HEK293 (cell line): ENCODE measurements at regions of chr4 and their contacts with region 1.

Region 1: DNA sequence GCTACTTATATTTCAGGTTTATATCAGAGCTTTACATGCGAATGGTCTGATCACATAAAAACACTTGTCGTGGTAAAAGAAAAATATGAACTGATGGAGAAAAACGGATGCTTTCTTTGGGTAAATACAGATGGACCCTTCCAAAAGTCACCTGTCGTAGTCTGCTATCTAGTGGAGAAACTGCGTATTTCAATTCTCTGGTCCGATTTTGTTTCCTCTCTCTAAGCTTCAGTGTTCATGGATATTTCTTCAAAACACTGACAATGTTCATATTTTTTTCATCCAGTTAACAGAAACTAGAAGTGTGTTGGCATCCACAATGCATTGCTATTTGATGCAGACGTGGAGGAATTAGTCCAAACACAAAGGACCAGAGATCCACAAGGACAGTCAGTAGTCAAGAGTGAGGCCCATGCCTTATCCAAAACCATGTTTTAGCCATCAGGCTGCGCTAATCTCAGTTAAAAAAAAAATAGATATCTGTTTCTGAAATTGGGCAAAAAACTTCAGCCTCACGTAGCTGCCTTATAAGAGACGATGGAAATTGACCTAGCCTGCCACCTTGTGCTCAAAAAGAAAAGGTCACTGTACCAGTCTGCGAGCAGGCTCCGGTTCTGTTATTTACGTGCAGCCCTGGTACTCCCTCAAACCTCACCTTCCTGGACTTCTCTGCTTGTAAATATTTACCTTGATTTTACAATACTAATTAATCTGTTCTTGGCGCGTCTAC is 16.0 kb downstream of the MEPE start:
- H3K4me3 ChIP-seq: no peak overlapping the region; the same call in 1 of the 2 replicates
- H3K27ac ChIP-seq: no peak overlapping the region
- H3K4me1 ChIP-seq: no peaks in the 10 kb centered on the region
- CTCF ChIP-seq: no peak

Region 2: DNA sequence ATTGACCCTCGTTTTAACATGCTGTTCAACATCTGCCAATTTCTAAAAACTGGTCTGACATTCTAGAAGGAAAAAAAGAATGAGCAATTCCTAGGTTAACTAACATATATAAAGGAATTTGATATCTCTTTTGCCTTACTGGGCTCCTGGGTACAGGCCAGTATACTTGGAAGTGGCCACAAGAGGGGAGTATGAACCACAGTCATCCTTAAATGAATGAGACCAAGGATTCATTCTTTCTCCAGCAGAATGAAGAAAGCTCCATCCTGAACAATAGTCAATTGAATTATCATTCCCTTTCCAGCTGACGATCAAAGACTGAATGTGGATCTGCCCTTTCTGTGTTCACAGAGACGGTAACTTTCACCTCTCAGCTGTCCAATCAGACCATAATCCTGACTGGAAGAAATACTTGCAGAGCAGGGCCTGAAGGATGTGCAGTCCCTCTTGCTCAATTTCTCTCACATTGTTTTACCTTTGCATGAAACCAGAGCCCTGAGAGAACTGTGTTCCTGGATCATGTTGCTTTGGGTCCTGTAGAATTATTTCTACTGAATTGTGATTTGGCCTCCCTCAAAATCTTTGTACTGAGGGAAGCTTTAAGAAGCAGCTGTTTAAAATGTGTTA is 304.8 kb before region 1 on chr4:
- CTCF ChIA-PET with region 1: interaction called, 17 read pairs
- POLR2A ChIA-PET with region 1: no interaction called
- H3K4me3 ChIP-seq: no peak overlapping the region
- H3K27ac ChIP-seq: no peak overlapping the region
- H3K4me1 ChIP-seq: no peaks in the 10 kb centered on the region
- CTCF ChIP-seq: no peak

Region 3: GRCh38 chr4:87949961-87950360 is 101.2 kb after region 1 on chr4:
- CTCF ChIA-PET with region 1: interaction called, 10 read pairs
- POLR2A ChIA-PET with region 1: no interaction called
- H3K4me3 ChIP-seq: no peak overlapping the region
- H3K27ac ChIP-seq: no peak overlapping the region
- H3K4me1 ChIP-seq: no peaks in the 10 kb centered on the region; the same call in 1 of the 2 replicates
- CTCF ChIP-seq: no peak

Region 4: DNA sequence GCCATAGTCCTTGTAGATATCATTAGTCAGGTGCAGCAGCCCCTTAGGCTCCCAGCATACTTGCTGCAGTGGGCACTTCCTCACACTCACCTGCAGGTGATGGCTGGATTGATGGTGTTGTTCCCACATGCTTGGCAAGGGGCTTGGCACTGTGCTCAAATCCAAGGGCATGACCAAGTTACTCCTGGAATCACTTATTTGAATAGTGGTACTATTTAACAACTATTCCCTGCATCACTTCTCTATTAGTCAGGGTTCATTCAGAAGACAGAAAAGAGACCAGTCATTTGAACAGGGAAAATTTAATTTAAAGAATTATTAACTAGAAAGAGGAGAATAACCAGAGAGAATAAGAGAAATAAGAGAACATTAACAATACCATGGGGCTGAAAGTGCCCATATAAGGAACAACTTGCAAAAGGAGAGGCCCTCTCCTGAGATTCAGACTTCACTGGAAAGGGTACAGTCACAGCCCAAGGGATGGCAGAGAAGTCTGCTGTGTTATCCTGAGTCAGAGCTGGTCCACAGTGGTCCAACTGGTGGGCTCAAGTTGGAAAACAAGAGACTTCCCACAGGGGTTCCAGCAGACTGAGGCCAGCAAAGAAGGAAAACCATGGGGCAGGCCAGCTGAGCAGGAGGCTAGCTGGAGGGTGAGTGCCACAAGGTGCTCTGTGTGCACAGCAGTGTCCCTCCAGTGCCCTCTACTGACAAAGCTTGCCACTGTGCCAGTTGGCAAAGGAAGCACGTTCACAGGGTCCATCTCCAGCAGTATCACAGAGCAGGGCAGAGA is 136.5 kb after region 1 on chr4:
- CTCF ChIA-PET with region 1: interaction called, 21 read pairs
- POLR2A ChIA-PET with region 1: no interaction called
- H3K4me3 ChIP-seq: no peak overlapping the region
- H3K27ac ChIP-seq: no peak overlapping the region
- H3K4me1 ChIP-seq: no peaks in the 10 kb centered on the region
- CTCF ChIP-seq: peak; percentile 74